Sciatic nerve (tissue), 2 donors: ENCODE measurements at regions of chr7 and their contacts with region 1.

Region 1: DNA sequence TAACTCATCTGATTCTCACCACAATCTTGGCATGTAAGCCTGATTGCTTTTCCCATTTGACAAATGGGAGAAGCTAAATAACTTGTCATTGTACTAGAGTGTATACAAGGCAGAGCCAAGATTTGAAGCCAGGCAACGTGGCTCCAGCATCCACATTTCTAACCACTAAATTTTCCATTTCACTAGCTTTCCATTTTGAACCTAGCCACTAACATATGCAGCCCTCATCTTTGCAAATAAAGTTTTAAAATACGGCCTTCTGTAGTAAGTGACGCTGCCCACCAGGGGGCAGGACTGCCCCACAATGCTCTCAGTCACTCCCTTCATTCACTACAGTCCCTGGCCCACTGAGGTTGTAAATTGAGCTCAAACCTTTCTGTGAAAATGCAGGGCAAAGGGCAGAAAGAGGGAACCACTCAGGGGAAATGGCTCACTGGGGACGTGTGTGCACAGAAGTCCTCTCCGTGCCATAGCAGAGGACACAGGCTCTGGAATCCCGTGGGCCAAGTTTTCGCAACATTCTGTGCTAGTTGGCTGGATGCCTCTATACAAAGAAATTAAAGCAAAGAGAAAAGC is 315.7 kb downstream of the TNS3 start:
- DNase-seq: peak; percentile 77
- ATAC-seq: peak; percentile 90

Region 2: GRCh38 chr7:47239931-47240421 is 26.2 kb before region 1 on chr7:
- intact Hi-C with region 1: no loop called
- DNase-seq: no peak
- ATAC-seq: peak; percentile 85

Region 3: GRCh38 chr7:47392231-47392759 is 126.1 kb after region 1 on chr7:
- intact Hi-C with region 1: no loop called
- DNase-seq: peak; percentile 87
- ATAC-seq: peak; percentile 95

Region 4: DNA sequence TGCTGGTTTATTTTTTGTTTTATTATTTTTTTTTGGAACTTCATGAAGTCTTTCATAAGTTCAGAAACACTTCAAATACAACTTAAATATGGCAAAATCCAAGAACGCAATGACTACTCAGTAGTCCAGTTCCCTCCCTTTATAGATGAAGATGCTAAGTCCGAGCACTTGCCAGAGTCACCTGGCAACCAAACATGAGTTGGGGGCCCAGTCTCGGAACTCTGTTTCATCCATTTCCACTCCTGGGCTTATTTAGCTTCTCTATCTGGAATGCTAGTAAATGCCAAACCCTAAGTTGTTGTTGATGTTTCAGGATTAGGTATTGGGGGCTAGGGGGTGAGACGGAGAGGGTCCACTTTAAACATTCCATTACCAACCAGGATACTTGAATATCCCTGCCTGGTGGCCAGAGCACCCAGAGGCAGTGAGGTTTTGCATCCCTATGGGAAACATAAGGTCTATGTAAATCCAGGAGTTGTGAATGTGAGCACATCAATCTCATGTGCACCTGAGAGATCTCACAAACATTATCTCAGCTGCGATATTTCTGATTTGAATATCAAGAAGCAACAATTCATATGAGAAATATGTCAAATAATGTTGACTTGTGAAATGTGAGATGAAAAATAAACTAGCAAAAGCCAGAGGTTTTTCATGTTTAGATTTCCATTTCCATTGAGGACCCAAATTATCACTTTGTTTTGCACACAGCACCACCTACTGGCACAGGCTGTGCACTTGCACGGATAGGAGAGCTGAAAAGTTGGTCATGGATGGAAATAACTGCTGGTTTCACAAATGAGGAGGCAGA is 552.8 kb after region 1 on chr7:
- intact Hi-C with region 1: loop called (anchors 5 kb)
- DNase-seq: peak; percentile 89
- ATAC-seq: peak; percentile 75

Region 5: GRCh38 chr7:47979145-47979831 is 713.1 kb after region 1 on chr7 and contains the start of gene HUS1:
- intact Hi-C with region 1: loop called (anchors 10 kb)
- DNase-seq: peak; percentile 94
- ATAC-seq: peak; percentile 99
- total RNA-seq, gene HUS1: 39.7 TPM